ENCODE measurements at regions of chr2 and their contacts with region 1.

Region 1: GRCh38 chr2:30231212-30231995 is at the start of gene LBH:
- DNase-seq: peak; percentile 51
- H3K4me3 Mint-ChIP-seq: peak within 1 kb of the TSS; percentile 66
- H3K27ac Mint-ChIP-seq: no peak within 1 kb of the TSS
- H3K4me1 Mint-ChIP-seq: peaks cover 11% of the 10 kb centered on the region
- H3K27me3 Mint-ChIP-seq: no peaks in the 10 kb centered on the region
- CTCF ChIP-seq: no peak
- total RNA-seq, gene LBH: 1.1 and 1.7 TPM in 2 replicates

Region 2: DNA sequence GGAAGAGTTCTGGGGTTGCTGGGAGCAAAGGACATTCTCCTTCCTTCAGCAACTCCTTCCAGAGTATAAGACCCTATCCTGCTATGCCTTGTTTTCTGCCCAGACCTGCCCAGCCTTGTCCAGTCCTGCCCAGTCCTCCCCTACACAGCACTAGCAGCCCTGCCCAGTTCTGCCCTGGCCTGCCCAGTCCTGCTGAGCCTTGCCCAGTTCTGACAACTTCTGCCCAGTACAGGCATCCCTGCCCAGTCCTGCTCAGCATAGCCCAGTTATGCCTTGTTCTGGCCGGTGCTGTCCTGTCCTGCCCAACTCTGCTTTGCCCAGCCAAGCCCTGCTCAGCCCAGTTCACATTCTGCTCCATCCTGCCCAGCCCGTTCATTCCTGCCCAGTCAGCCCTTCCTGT is 265.1 kb before region 1 on chr2:
- CTCF ChIA-PET with region 1: no interaction called
- POLR2A ChIA-PET with region 1: no interaction called
- intact Hi-C with region 1: no loop called
- DNase-seq: peak; percentile 68
- H3K4me3 Mint-ChIP-seq: no peak overlapping the region
- H3K27ac Mint-ChIP-seq: peak overlapping the region; percentile 72
- H3K4me1 Mint-ChIP-seq: peaks cover 18% of the 10 kb centered on the region
- H3K27me3 Mint-ChIP-seq: peaks cover 12% of the 10 kb centered on the region
- CTCF ChIP-seq: no peak

Region 3: GRCh38 chr2:30273261-30273861 is 42.0 kb after region 1 on chr2:
- CTCF ChIA-PET with region 1: interaction called, 4 read pairs
- POLR2A ChIA-PET with region 1: no interaction called
- intact Hi-C with region 1: loop called (anchors 5 kb)
- DNase-seq: peak; percentile 57
- H3K4me3 Mint-ChIP-seq: no peak overlapping the region
- H3K27ac Mint-ChIP-seq: peak overlapping the region; percentile 19
- H3K4me1 Mint-ChIP-seq: peaks cover 28% of the 10 kb centered on the region
- H3K27me3 Mint-ChIP-seq: no peaks in the 10 kb centered on the region
- CTCF ChIP-seq: no peak

Region 4: GRCh38 chr2:30447149-30448045 is 216.0 kb after region 1 on chr2 and contains the start of gene LCLAT1:
- CTCF ChIA-PET with region 1: no interaction called
- POLR2A ChIA-PET with region 1: interaction called, 4 read pairs
- intact Hi-C with region 1: loop called (anchors 10 kb)
- DNase-seq: peak; percentile 78
- H3K4me3 Mint-ChIP-seq: peak within 1 kb of the TSS; percentile 88
- H3K27ac Mint-ChIP-seq: peak within 1 kb of the TSS; percentile 99
- H3K4me1 Mint-ChIP-seq: peaks cover 4% of the 10 kb centered on the region
- H3K27me3 Mint-ChIP-seq: no peaks in the 10 kb centered on the region
- CTCF ChIP-seq: no peak
- total RNA-seq, gene LCLAT1: 27.5 and 29.0 TPM in 2 replicates

Region 5: GRCh38 chr2:30514134-30514847 is 282.9 kb after region 1 on chr2:
- CTCF ChIA-PET with region 1: no interaction called
- POLR2A ChIA-PET with region 1: no interaction called
- intact Hi-C with region 1: no loop called
- DNase-seq: peak; percentile 63
- H3K4me3 Mint-ChIP-seq: no peak overlapping the region
- H3K27ac Mint-ChIP-seq: peak overlapping the region; percentile 57
- H3K4me1 Mint-ChIP-seq: peaks cover 35% of the 10 kb centered on the region
- H3K27me3 Mint-ChIP-seq: no peaks in the 10 kb centered on the region
- CTCF ChIP-seq: no peak